ENCODE measurements at regions of chr15 and their contacts with region 1.

Region 1: GRCh38 chr15:92808978-92809879 is 90.9 kb upstream of the CHD2 start:
- DNase-seq: peak; percentile 99
- H3K4me3 Mint-ChIP-seq: peak overlapping the region; percentile 91
- H3K27ac Mint-ChIP-seq: peak overlapping the region; percentile 99
- H3K4me1 Mint-ChIP-seq: peaks cover 55% of the 10 kb centered on the region
- H3K27me3 Mint-ChIP-seq: no peaks in the 10 kb centered on the region

Region 2: GRCh38 chr15:92788196-92788595 is 21.0 kb before region 1 on chr15:
- CTCF ChIA-PET with region 1: no interaction called
- POLR2A ChIA-PET with region 1: no interaction called
- DNase-seq: no peak
- H3K4me3 Mint-ChIP-seq: no peak overlapping the region
- H3K27ac Mint-ChIP-seq: no peak overlapping the region
- H3K4me1 Mint-ChIP-seq: no peaks in the 10 kb centered on the region
- H3K27me3 Mint-ChIP-seq: peaks cover 3% of the 10 kb centered on the region

Region 3: GRCh38 chr15:92820236-92821021 is 11.2 kb after region 1 on chr15:
- CTCF ChIA-PET with region 1: interaction called, 91 read pairs
- POLR2A ChIA-PET with region 1: interaction called, 7 read pairs
- DNase-seq: peak; percentile 89
- H3K4me3 Mint-ChIP-seq: peak overlapping the region; percentile 80
- H3K27ac Mint-ChIP-seq: peak overlapping the region; percentile 85
- H3K4me1 Mint-ChIP-seq: peaks cover 67% of the 10 kb centered on the region
- H3K27me3 Mint-ChIP-seq: no peaks in the 10 kb centered on the region

Region 4: GRCh38 chr15:92845126-92845508 is 35.9 kb after region 1 on chr15:
- CTCF ChIA-PET with region 1: interaction called, 14 read pairs
- POLR2A ChIA-PET with region 1: interaction called, 3 read pairs
- DNase-seq: no peak
- H3K4me3 Mint-ChIP-seq: peak overlapping the region; percentile 55
- H3K27ac Mint-ChIP-seq: peak overlapping the region; percentile 96
- H3K4me1 Mint-ChIP-seq: peaks cover 81% of the 10 kb centered on the region
- H3K27me3 Mint-ChIP-seq: no peaks in the 10 kb centered on the region

Region 5: DNA sequence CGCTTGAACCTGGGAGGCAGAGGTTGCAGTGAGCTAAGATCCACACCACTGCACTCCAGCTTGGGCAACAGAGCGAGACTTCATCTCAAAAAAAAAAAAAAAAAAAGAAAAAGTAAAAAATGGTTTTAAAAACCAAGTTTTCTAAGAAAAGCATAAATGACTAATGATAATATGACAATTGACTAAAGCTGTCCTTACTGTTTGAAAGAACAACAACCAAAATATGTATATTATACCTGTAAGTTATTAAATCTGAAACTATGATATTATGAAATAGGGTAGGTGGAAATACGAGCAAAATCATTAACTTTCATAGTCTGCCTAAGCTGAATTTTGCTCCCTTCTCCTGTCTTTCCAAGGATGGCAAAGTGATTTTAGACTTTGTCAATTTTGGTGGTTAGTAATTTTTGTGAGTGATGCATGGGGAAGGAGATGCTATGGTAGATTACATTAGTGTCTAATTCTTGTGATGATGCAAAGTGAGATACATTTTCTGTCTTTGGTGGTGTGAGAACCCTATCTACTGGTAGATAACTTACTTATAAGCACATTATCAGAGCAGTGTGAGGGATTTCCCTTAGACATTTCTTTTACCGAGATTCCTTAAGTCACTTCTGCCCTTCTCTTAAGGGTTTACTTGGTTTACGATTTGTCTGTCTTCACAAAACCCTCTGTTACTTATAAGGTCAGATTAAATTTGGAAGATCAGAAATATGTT is 80.3 kb after region 1 on chr15:
- CTCF ChIA-PET with region 1: interaction called, 39 read pairs
- POLR2A ChIA-PET with region 1: interaction called, 9 read pairs
- DNase-seq: no peak
- H3K4me3 Mint-ChIP-seq: peak overlapping the region; percentile 58
- H3K27ac Mint-ChIP-seq: peak overlapping the region; percentile 73
- H3K4me1 Mint-ChIP-seq: peaks cover 71% of the 10 kb centered on the region
- H3K27me3 Mint-ChIP-seq: no peaks in the 10 kb centered on the region

Region 6: DNA sequence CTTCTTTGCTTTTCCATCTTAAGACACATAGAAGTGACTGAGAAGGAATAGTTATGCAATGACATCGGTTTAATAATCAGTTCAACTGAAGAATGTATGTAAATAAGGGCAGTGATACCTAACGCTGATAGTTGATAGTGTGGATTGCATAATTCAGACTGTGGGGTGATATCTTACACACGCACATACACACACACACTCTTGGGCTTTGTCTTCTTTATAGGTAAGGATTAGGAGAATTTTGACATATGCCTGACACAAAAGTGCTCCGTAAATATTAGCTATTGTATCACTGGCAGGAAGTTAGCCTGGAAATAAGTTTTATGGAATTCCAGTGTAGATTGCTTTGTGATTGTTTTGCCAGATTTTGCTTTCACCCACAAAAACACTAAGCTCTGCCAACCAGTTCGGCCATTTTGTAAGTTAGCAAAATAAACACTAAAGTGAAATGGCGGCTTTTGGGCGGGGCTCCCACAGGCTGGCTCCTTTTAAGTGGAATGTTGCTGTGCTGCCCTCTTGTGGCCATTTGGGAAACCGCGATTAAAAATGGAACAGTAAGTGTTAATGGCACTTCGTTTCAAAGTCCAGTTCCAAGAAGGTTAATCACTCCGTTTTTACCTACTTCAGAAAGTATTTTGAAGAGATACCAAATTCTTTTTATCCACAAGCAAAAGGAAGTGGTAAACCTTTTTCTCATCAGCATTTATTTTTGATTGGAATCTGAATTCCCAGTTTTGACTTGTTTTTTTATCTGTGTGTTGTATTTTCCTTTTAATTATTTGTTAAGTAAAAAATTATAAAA is 108.6 kb after region 1 on chr15:
- CTCF ChIA-PET with region 1: interaction called, 246 read pairs
- POLR2A ChIA-PET with region 1: interaction called, 5 read pairs
- DNase-seq: peak; percentile 96
- H3K4me3 Mint-ChIP-seq: peak overlapping the region; percentile 15
- H3K27ac Mint-ChIP-seq: peak overlapping the region; percentile 86
- H3K4me1 Mint-ChIP-seq: peaks cover 87% of the 10 kb centered on the region
- H3K27me3 Mint-ChIP-seq: no peaks in the 10 kb centered on the region